Sigmoid colon (tissue), 7 donors: ENCODE measurements at regions of chr6 and their contacts with region 1.

Region 1: GRCh38 chr6:11653028-11653583 is 115.6 kb downstream of the TMEM170B start:
- DNase-seq: no peak
- H3K4me3 ChIP-seq: no peak overlapping the region
- H3K27ac ChIP-seq: peak overlapping the region in 2 of 4 donors; percentile 5 to 18
- H3K4me1 ChIP-seq: peaks cover 0 to 37% (median 19%) of the 10 kb centered on the region in 4 donors
- H3K27me3 ChIP-seq: no peaks in the 10 kb centered on the region
- CTCF ChIP-seq: no peak
- EP300 ChIP-seq: no peak
- POLR2A ChIP-seq: no peak

Region 2: DNA sequence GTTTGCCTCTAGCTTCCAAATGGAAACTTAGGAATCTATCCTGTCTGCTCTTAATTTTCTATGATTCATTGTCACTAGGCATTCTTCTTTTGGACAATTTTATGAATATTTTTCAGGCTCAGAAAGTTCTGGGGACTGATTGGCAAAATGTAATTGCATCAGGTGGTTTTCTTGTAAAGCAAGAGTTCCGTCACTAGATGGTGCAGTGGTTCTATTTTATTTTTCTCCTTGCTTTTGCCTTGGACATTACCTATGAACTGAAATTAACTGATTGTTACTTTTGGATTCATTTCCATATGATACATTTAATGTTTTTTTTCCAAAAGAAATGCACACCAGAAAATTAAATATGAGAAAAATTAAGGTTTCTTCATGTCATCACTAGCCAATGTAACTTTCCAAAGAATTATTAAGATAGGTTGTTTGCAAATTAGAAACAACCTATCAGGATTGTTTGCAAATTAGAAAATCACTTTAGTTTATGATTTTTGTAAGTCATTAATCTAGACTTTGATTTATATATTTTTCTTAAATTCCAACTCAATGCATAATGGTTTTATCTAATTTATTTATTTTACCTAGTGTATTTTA is 67.6 kb before region 1 on chr6:
- intact Hi-C with region 1: loop called (anchors 5 kb)
- DNase-seq: no peak
- H3K4me3 ChIP-seq: no peak overlapping the region
- H3K27ac ChIP-seq: peak overlapping the region in 1 of 4 donors; percentile 37
- H3K4me1 ChIP-seq: peaks cover 0 to 24% (median 17%) of the 10 kb centered on the region in 4 donors
- H3K27me3 ChIP-seq: no peaks in the 10 kb centered on the region
- CTCF ChIP-seq: peak in 3 of 4 experiments; percentile 42 to 47 (median 45)
- EP300 ChIP-seq: no peak
- POLR2A ChIP-seq: no peak

Region 3: GRCh38 chr6:12011276-12012076 is 358.4 kb after region 1 on chr6:
- intact Hi-C with region 1: loop called (anchors 5 kb)
- DNase-seq: peak; percentile 99
- H3K4me3 ChIP-seq: peak overlapping the region; percentile 47 to 93 (median 81)
- H3K27ac ChIP-seq: peak overlapping the region; percentile 93 to 99 (median 98)
- H3K4me1 ChIP-seq: peaks cover 0 to 35% (median 31%) of the 10 kb centered on the region in 4 donors
- H3K27me3 ChIP-seq: no peaks in the 10 kb centered on the region
- CTCF ChIP-seq: no peak
- EP300 ChIP-seq: peak in 3 of 4 donors; percentile 14 to 56 (median 52)
- POLR2A ChIP-seq: no peak

Region 4: GRCh38 chr6:12289933-12290820 is 637.1 kb after region 1 on chr6 and contains the start of gene EDN1:
- intact Hi-C with region 1: loop called (anchors 2 kb)
- DNase-seq: peak; percentile 85
- H3K4me3 ChIP-seq: peak within 1 kb of the TSS; percentile 32 to 53 (median 50)
- H3K27ac ChIP-seq: peak within 1 kb of the TSS; percentile 64 to 80 (median 72)
- H3K4me1 ChIP-seq: peaks cover 0 to 33% (median 12%) of the 10 kb centered on the region in 4 donors
- H3K27me3 ChIP-seq: no peaks in the 10 kb centered on the region
- CTCF ChIP-seq: peak; percentile 24 to 70 (median 50)
- EP300 ChIP-seq: no peak
- POLR2A ChIP-seq: peak in 1 of 2 donors; percentile 50
- total RNA-seq, gene EDN1: 4.9 to 9.5 (median 7.2) TPM

Region 5: GRCh38 chr6:12890171-12890790 is 1237.2 kb after region 1 on chr6:
- intact Hi-C with region 1: loop called (anchors 5 kb)
- DNase-seq: no peak
- H3K4me3 ChIP-seq: no peak overlapping the region
- H3K27ac ChIP-seq: no peak overlapping the region
- H3K4me1 ChIP-seq: peaks cover 0 to 6% (median 3%) of the 10 kb centered on the region in 4 donors
- H3K27me3 ChIP-seq: no peaks in the 10 kb centered on the region
- CTCF ChIP-seq: no peak
- EP300 ChIP-seq: no peak
- POLR2A ChIP-seq: no peak